Dendritic cell treated with granulocyte-macrophage colony-stimulating factor and Interleukin-4, amounts not matched to agents 40 ng/mL and 50 ng/mL, for 4 days (primary cell): ENCODE measurements at regions of chr17 and their contacts with region 1.

Region 1: DNA sequence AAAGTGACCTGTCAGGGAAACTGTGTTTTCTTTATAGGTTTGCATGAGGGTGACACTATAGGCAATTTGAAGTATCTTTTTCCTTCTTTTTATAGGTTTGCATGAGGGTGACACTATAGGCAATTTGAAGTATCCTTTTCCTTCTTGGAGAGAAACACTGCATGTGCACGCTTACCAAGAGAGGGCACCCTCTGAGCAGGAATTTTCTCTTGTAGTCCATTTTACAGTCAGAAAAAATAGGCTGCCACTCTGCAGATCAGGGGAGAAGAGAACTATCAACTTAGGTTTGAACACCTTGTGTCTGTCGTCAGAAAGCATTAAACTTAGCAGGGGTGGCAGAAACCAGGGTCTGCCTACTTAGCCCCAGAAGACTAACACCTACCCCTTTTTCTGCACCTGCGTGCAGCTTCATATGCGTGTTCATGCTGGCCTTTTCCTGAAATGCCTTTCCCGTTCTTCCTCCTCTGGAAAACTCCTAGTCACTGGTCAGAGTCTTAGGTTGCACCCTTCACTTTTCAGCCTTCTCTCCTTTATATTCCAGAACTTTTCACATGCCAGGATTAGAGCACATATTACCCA is 16.4 kb upstream of the SMIM36 start:
- H3K4me3 Mint-ChIP-seq: no peak overlapping the region
- H3K27ac Mint-ChIP-seq: no peak overlapping the region
- H3K4me1 Mint-ChIP-seq: no peaks in the 10 kb centered on the region
- H3K27me3 Mint-ChIP-seq: peaks cover 4% of the 10 kb centered on the region

Region 2: GRCh38 chr17:54968262-54968987 is 559.2 kb before region 1 on chr17 and contains the starts of genes COX11 and STXBP4:
- intact Hi-C with region 1: no loop called
- H3K4me3 Mint-ChIP-seq: no peak within 1 kb of the TSS
- H3K27ac Mint-ChIP-seq: no peak within 1 kb of the TSS
- H3K4me1 Mint-ChIP-seq: peaks cover 13% of the 10 kb centered on the region
- H3K27me3 Mint-ChIP-seq: no peaks in the 10 kb centered on the region

Region 3: DNA sequence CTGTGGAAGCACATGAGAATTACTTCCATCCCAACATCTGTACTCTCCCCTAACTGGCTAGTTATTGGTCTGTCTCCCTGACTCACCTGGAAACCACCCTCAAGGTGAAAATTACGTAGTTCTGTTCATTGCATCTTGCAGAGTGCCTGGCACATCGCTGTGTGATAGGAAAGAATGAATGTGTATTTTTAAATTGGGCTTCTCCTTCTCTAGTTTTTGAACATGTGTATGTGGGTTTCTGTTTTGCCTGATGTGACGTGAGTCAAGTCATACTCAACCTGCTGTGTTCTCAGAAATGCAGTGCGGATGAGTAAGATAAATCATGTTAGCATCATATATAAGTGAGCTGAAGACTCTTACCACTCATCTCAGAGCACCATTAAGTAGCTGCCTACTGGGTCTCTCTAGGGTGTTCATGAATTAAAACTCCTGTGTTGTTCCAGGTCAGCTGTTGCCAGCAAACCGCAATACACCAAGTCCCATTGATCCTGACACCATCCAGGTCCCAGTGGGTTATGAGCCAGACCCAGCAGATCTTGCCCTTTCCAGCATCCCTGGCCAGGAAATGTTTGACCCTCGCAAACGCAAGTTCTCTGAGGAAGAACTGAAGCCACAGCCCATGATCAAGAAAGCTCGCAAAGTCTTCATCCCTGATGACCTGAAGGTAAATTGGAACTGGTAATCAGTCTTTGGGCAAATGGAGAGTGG is 212.7 kb before region 1 on chr17:
- intact Hi-C with region 1: no loop called
- H3K4me3 Mint-ChIP-seq: no peak overlapping the region
- H3K27ac Mint-ChIP-seq: no peak overlapping the region
- H3K4me1 Mint-ChIP-seq: no peaks in the 10 kb centered on the region
- H3K27me3 Mint-ChIP-seq: no peaks in the 10 kb centered on the region

Region 4: GRCh38 chr17:55601874-55602364 is 74.3 kb after region 1 on chr17:
- intact Hi-C with region 1: loop called (anchors 1 kb)
- H3K4me3 Mint-ChIP-seq: no peak overlapping the region
- H3K27ac Mint-ChIP-seq: no peak overlapping the region
- H3K4me1 Mint-ChIP-seq: no peaks in the 10 kb centered on the region
- H3K27me3 Mint-ChIP-seq: peaks cover 3% of the 10 kb centered on the region

Region 5: DNA sequence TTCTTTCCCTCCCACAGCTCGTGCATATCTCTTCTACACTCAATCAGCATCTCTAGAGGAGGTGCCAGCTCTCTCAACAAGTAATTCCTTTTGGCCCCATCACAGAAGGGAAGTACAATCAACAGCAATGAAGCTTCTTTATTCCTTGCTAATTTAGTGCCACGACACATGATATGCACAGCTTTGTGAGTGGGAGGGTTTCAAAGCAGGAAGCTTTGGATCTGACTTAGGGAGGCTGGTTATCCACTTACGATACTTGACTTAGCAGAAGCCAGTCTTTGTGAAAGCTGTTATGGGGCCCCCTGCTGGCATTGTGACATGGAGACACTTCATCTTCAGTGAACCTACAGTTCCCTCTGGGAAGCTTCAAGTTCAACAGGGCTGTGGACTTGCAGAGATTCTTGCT is 114.0 kb after region 1 on chr17:
- intact Hi-C with region 1: loop called (anchors 1 kb)
- H3K4me3 Mint-ChIP-seq: no peak overlapping the region
- H3K27ac Mint-ChIP-seq: no peak overlapping the region
- H3K4me1 Mint-ChIP-seq: peaks cover 25% of the 10 kb centered on the region
- H3K27me3 Mint-ChIP-seq: no peaks in the 10 kb centered on the region

Region 6: GRCh38 chr17:55717898-55718735 is 190.5 kb after region 1 on chr17:
- intact Hi-C with region 1: loop called (anchors 1 kb)
- H3K4me3 Mint-ChIP-seq: no peak overlapping the region
- H3K27ac Mint-ChIP-seq: no peak overlapping the region
- H3K4me1 Mint-ChIP-seq: peaks cover 13% of the 10 kb centered on the region
- H3K27me3 Mint-ChIP-seq: peaks cover 18% of the 10 kb centered on the region

Region 7: GRCh38 chr17:55770148-55770870 is 242.7 kb after region 1 on chr17:
- intact Hi-C with region 1: loop called (anchors 1 kb)
- H3K4me3 Mint-ChIP-seq: no peak overlapping the region
- H3K27ac Mint-ChIP-seq: no peak overlapping the region
- H3K4me1 Mint-ChIP-seq: peaks cover 17% of the 10 kb centered on the region
- H3K27me3 Mint-ChIP-seq: no peaks in the 10 kb centered on the region